ENCODE measurements at regions of chr3 and their contacts with region 1.

Region 1: GRCh38 chr3:193708270-193708669 is 115.3 kb downstream of the OPA1 start:
- DNase-seq: no peak
- ATAC-seq: no peak
- H3K4me3 ChIP-seq: no peak overlapping the region
- H3K4me3 Mint-ChIP-seq: no peak overlapping the region
- H3K27ac ChIP-seq: no peak overlapping the region
- H3K27ac Mint-ChIP-seq: no peak overlapping the region
- H3K4me1 ChIP-seq: no peaks in the 10 kb centered on the region
- H3K4me1 Mint-ChIP-seq: no peaks in the 10 kb centered on the region
- H3K27me3 ChIP-seq: no peaks in the 10 kb centered on the region
- H3K27me3 Mint-ChIP-seq: no peaks in the 10 kb centered on the region
- CTCF ChIP-seq: no peak

Region 2: DNA sequence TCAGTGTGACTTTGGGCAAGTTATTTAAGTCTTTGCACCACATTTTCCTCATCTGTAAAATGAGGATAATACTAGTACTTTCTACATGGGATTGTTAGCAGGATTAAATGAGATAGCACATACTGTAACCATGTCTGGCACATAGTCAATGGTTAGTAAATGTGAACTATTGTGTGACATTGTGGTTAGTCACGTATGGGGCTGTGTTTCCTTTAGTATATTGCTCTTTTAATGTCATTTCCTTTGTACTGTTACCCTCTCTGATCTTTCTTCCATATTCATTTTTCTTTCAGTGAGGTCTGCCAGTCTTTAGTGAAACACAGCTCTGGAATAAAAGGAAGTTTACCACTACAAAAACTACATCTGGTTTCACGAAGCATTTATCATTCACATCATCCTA is 93.8 kb before region 1 on chr3:
- CTCF ChIA-PET with region 1: no interaction called
- POLR2A ChIA-PET with region 1: no interaction called
- intact Hi-C with region 1: no loop called
- DNase-seq: peak in 1 of 14 experiments; percentile 10
- ATAC-seq: no peak
- H3K4me3 ChIP-seq: no peak overlapping the region
- H3K4me3 Mint-ChIP-seq: no peak overlapping the region
- H3K27ac ChIP-seq: no peak overlapping the region
- H3K27ac Mint-ChIP-seq: peak overlapping the region; percentile 72
- H3K4me1 ChIP-seq: no peaks in the 10 kb centered on the region
- H3K4me1 Mint-ChIP-seq: peaks cover 15% of the 10 kb centered on the region
- H3K27me3 ChIP-seq: no peaks in the 10 kb centered on the region
- H3K27me3 Mint-ChIP-seq: no peaks in the 10 kb centered on the region
- CTCF ChIP-seq: no peak

Region 3: DNA sequence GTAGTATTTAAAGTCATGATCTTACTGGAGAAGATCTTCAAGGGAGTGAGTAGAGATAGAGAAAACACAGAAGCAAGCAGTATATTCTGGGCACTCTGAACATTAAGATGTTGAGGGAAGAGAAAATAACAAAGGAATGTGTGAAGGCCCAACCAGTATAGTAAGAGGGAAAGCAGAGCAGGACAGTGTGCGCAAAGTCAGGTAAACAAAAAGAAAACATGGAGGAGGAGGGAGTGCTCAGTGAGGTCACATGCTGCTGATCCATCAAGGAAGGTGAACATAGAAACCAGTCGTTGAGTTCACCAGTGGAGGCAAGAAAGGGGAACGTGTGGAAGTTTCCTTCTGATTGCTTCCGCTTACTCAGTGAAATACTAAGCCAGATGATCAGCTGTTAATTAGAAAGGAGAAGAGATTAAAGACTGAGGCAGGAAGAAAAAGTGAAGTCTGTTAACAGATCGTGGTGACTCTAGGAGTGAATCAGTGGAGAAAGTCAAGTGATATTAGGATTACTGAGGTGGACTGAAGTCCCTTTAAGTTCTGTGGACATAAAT is 68.0 kb before region 1 on chr3:
- CTCF ChIA-PET with region 1: no interaction called
- POLR2A ChIA-PET with region 1: no interaction called
- intact Hi-C with region 1: loop called in 1 of 2 experiments (anchors 2 kb)
- DNase-seq: peak in 2 of 14 experiments; percentile 2 to 16
- ATAC-seq: no peak
- H3K4me3 ChIP-seq: no peak overlapping the region
- H3K4me3 Mint-ChIP-seq: no peak overlapping the region
- H3K27ac ChIP-seq: no peak overlapping the region
- H3K27ac Mint-ChIP-seq: no peak overlapping the region
- H3K4me1 ChIP-seq: no peaks in the 10 kb centered on the region
- H3K4me1 Mint-ChIP-seq: no peaks in the 10 kb centered on the region
- H3K27me3 ChIP-seq: no peaks in the 10 kb centered on the region
- H3K27me3 Mint-ChIP-seq: no peaks in the 10 kb centered on the region
- CTCF ChIP-seq: no peak

Measured in CD4-positive, alpha-beta T cell (primary cell).